CD8-positive, alpha-beta T cell (primary cell): ENCODE measurements at regions of chr3 and their contacts with region 1.

Region 1: DNA sequence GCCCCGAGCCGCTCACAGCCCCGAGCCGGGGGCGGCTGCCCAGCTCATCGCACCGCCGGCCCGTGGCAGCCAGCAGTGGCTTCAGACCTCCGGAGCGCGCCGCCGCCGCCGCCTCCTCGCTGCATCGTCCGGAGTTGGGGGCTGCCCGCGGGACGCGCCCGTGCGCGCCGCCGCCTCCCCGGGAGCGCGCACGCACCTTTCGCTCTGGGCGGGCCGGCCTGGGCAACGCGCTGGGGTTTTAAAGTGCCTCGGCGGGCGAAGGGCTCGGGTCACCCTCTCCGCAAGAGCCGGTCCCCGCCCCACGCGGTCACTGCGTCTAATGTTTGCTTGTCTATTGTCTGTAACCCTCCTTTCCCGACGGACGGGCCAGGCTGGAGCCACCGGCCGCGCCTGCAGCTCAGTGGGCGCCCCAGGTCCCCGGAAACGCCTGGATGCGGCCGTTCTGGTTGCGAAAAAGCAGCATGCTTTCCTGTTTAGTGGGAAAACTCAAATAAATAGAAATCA is at the start of gene RYK:
- DNase-seq: peak; percentile 50 to 89 (median 73)
- ATAC-seq: peak; percentile 74
- H3K4me3 ChIP-seq: peak within 1 kb of the TSS; percentile 76 to 86
- H3K4me3 Mint-ChIP-seq: peak within 1 kb of the TSS; percentile 94
- H3K27ac ChIP-seq: peak within 1 kb of the TSS; percentile 65 to 68
- H3K27ac Mint-ChIP-seq: peak within 1 kb of the TSS; percentile 94
- H3K4me1 ChIP-seq: peaks cover 17% of the 10 kb centered on the region
- H3K4me1 Mint-ChIP-seq: peaks cover 44% of the 10 kb centered on the region
- H3K27me3 ChIP-seq: no peaks in the 10 kb centered on the region
- H3K27me3 Mint-ChIP-seq: no peaks in the 10 kb centered on the region
- CTCF ChIP-seq: no peak
- total RNA-seq, gene RYK: 63.6 to 64.7 TPM

Region 2: GRCh38 chr3:133663569-133664313 is 587.0 kb before region 1 on chr3:
- CTCF ChIA-PET with region 1: no interaction called
- POLR2A ChIA-PET with region 1: no interaction called
- intact Hi-C with region 1: no loop called
- DNase-seq: peak in 4 of 9 experiments; percentile 14 to 76 (median 42)
- ATAC-seq: peak; percentile 53
- H3K4me3 ChIP-seq: no peak overlapping the region
- H3K4me3 Mint-ChIP-seq: peak overlapping the region; percentile 98
- H3K27ac ChIP-seq: peak overlapping the region in 1 of 2 experiments; percentile 62
- H3K27ac Mint-ChIP-seq: peak overlapping the region; percentile 80
- H3K4me1 ChIP-seq: peaks cover 26% of the 10 kb centered on the region
- H3K4me1 Mint-ChIP-seq: peaks cover 47% of the 10 kb centered on the region
- H3K27me3 ChIP-seq: no peaks in the 10 kb centered on the region
- H3K27me3 Mint-ChIP-seq: no peaks in the 10 kb centered on the region
- CTCF ChIP-seq: peak; percentile 66

Region 3: DNA sequence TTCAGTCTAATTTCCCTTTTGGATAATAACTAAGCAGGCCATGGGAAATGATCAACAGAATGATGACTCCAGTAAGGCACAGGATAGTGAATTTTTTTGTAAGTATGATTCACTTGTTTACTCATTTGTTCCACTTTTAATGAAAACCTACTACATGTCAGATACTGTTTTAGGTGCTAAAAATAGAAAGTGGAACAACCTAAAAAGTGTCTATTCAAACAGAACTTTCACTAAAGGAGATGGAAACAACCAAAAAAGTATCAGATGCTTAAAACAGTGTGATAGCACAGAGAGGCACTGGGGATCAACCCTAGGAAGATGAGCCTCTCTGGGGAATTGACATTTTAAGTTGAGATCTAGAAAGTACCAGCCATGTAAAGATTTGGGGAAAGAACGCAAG is 11.2 kb before region 1 on chr3:
- CTCF ChIA-PET with region 1: interaction called, 4 read pairs
- POLR2A ChIA-PET with region 1: interaction called, 13 read pairs
- intact Hi-C with region 1: no loop called
- DNase-seq: no peak
- ATAC-seq: no peak
- H3K4me3 ChIP-seq: no peak overlapping the region
- H3K4me3 Mint-ChIP-seq: no peak overlapping the region
- H3K27ac ChIP-seq: no peak overlapping the region
- H3K27ac Mint-ChIP-seq: peak overlapping the region; percentile 30
- H3K4me1 ChIP-seq: peaks cover 28% of the 10 kb centered on the region
- H3K4me1 Mint-ChIP-seq: peaks cover 85% of the 10 kb centered on the region
- H3K27me3 ChIP-seq: no peaks in the 10 kb centered on the region
- H3K27me3 Mint-ChIP-seq: no peaks in the 10 kb centered on the region
- CTCF ChIP-seq: no peak

Region 4: DNA sequence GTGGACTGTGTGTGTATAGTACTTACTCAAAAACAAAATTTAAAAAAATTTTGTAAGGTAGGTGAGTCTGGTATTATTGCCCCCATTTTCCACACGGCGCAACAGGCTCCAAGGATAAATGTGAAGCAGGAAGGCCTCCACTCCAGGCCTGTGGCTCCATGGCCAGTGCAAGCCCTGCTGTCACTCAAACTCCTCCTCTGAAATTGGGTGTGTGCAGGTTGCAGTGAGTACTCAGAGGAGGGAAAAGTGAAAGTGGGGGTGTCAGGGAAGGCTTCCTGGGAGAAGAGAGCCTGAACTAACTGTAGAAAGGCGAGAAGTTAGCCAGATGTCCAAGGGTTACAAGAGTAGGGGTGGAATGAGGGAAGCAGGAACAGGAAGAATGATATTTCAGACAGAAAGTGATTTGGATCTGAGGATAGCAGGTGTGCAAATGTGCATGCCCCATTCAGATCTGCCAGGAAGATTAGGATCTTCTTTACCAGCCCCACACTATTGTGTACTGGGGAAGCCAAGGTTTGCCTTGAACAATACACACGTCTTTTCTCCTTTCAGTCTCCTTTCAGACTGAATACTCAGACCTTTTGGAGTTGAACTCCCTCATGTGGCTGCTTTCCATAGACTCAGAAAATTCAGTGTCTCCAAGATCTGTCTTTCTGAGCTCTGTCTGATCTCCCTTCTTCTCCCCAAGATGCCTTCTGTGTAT is 48.6 kb after region 1 on chr3:
- CTCF ChIA-PET with region 1: no interaction called
- POLR2A ChIA-PET with region 1: no interaction called
- intact Hi-C with region 1: loop called in 1 of 2 experiments (anchors 5 kb)
- DNase-seq: no peak
- ATAC-seq: no peak
- H3K4me3 ChIP-seq: no peak overlapping the region
- H3K4me3 Mint-ChIP-seq: no peak overlapping the region
- H3K27ac ChIP-seq: no peak overlapping the region
- H3K27ac Mint-ChIP-seq: no peak overlapping the region
- H3K4me1 ChIP-seq: peaks cover 10% of the 10 kb centered on the region
- H3K4me1 Mint-ChIP-seq: no peaks in the 10 kb centered on the region
- H3K27me3 ChIP-seq: no peaks in the 10 kb centered on the region
- H3K27me3 Mint-ChIP-seq: peaks cover 17% of the 10 kb centered on the region
- CTCF ChIP-seq: no peak